B cell (primary cell): ENCODE measurements at regions of chr11 and their contacts with region 1.

Region 1: GRCh38 chr11:62694455-62695167 is 5.3 kb upstream of the LRRN4CL start:
- DNase-seq: peak; percentile 85
- ATAC-seq: peak; percentile 71
- H3K4me3 ChIP-seq: no peak overlapping the region
- H3K4me3 Mint-ChIP-seq: no peak overlapping the region
- H3K27ac ChIP-seq: no peak overlapping the region
- H3K27ac Mint-ChIP-seq: no peak overlapping the region
- H3K4me1 ChIP-seq: peaks cover 0 to 6% of the 10 kb centered on the region in 2 donors
- H3K4me1 Mint-ChIP-seq: peaks cover 5% of the 10 kb centered on the region
- H3K27me3 ChIP-seq: no peaks in the 10 kb centered on the region
- H3K27me3 Mint-ChIP-seq: no peaks in the 10 kb centered on the region
- CTCF ChIP-seq: peak; percentile 87

Region 2: GRCh38 chr11:62383822-62384221 is 310.8 kb before region 1 on chr11:
- CTCF ChIA-PET with region 1: interaction called, 3 read pairs
- POLR2A ChIA-PET with region 1: no interaction called
- intact Hi-C with region 1: loop called (anchors 1 kb)
- DNase-seq: no peak
- ATAC-seq: no peak
- H3K4me3 ChIP-seq: no peak overlapping the region
- H3K4me3 Mint-ChIP-seq: no peak overlapping the region
- H3K27ac ChIP-seq: no peak overlapping the region
- H3K27ac Mint-ChIP-seq: no peak overlapping the region
- H3K4me1 ChIP-seq: peaks cover 0 to 6% of the 10 kb centered on the region in 2 donors
- H3K4me1 Mint-ChIP-seq: peaks cover 5% of the 10 kb centered on the region
- H3K27me3 ChIP-seq: no peaks in the 10 kb centered on the region
- H3K27me3 Mint-ChIP-seq: no peaks in the 10 kb centered on the region
- CTCF ChIP-seq: no peak

Region 3: GRCh38 chr11:62394825-62395538 is 299.6 kb before region 1 on chr11:
- CTCF ChIA-PET with region 1: interaction called, 20 read pairs
- POLR2A ChIA-PET with region 1: no interaction called
- intact Hi-C with region 1: loop called (anchors 1 kb)
- DNase-seq: peak; percentile 81
- ATAC-seq: peak; percentile 68
- H3K4me3 ChIP-seq: no peak overlapping the region
- H3K4me3 Mint-ChIP-seq: no peak overlapping the region
- H3K27ac ChIP-seq: no peak overlapping the region
- H3K27ac Mint-ChIP-seq: no peak overlapping the region
- H3K4me1 ChIP-seq: no peaks in the 10 kb centered on the region
- H3K4me1 Mint-ChIP-seq: peaks cover 2% of the 10 kb centered on the region
- H3K27me3 ChIP-seq: peaks cover 0 to 5% (median 0%) of the 10 kb centered on the region in 4 experiments
- H3K27me3 Mint-ChIP-seq: peaks cover 11% of the 10 kb centered on the region
- CTCF ChIP-seq: peak; percentile 79

Region 4: GRCh38 chr11:62671575-62672389 is 22.8 kb before region 1 on chr11 and contains the starts of genes LBHD1 and UQCC3:
- CTCF ChIA-PET with region 1: interaction called, 10 read pairs
- POLR2A ChIA-PET with region 1: no interaction called
- intact Hi-C with region 1: no loop called
- DNase-seq: peak; percentile 86
- ATAC-seq: peak; percentile 77
- H3K4me3 ChIP-seq: peak within 1 kb of the TSS; percentile 85 to 97 (median 87)
- H3K4me3 Mint-ChIP-seq: peak within 1 kb of the TSS; percentile 100
- H3K27ac ChIP-seq: peak within 1 kb of the TSS; percentile 56 to 71
- H3K27ac Mint-ChIP-seq: peak within 1 kb of the TSS; percentile 97
- H3K4me1 ChIP-seq: peaks cover 21 to 36% of the 10 kb centered on the region in 2 donors
- H3K4me1 Mint-ChIP-seq: peaks cover 48% of the 10 kb centered on the region
- H3K27me3 ChIP-seq: no peaks in the 10 kb centered on the region
- H3K27me3 Mint-ChIP-seq: no peaks in the 10 kb centered on the region
- CTCF ChIP-seq: no peak
- total RNA-seq, gene LBHD1: 32.5 and 33.3 TPM in 2 replicates
- total RNA-seq, gene UQCC3: 6.5 and 8.9 TPM in 2 replicates

Region 5: DNA sequence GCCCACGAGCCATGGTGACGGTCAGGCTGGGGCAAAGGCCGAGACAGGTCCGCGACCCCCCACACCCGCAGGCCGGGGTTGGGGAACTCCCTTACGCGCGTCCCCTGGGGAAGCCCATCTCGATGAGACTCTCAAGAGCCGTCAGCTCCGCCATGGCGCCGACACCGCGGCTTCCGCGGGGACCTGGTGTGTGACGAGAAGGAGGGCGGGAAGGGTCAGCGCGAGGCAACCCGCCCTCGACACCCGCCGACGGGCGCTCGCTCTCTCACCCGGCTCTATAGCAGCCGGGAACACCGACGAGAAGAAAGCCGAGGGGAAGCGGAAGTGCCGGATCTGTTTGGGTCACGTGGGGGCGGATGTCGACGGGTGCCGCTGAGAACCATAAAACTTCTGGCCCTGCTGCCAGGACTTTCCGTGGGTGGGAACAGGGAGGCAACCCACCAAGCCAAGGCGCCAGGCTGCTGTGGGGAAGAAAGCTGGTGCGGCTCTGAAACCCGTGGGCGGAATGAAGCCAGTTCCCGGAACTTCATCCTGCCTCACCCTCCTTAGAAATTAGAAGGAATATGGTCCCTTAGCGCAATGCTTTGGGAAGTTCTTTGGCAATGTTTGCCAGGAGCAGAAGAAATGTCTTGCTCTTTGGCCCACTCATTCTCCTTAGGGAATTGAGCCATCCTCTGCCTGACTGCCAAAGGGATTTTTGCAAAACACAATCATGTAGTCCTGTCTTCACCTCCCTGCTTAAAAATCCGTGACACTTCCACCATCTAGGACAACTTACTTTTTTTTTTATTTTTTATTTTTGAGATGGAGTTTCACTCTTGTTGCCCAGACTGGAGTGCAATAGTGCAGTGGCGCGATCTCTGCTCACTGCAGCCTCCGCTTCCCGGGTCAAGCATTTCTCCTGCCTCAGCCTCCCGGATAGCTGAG is 15.6 kb before region 1 on chr11 and contains the start of gene UBXN1:
- CTCF ChIA-PET with region 1: interaction called, 32 read pairs
- POLR2A ChIA-PET with region 1: interaction called, 5 read pairs
- intact Hi-C with region 1: loop called (anchors 1 kb)
- DNase-seq: peak; percentile 92
- ATAC-seq: peak; percentile 77
- H3K4me3 ChIP-seq: peak within 1 kb of the TSS; percentile 71 to 99 (median 98)
- H3K4me3 Mint-ChIP-seq: peak within 1 kb of the TSS; percentile 88
- H3K27ac ChIP-seq: peak within 1 kb of the TSS; percentile 83 to 99
- H3K27ac Mint-ChIP-seq: peak within 1 kb of the TSS; percentile 93
- H3K4me1 ChIP-seq: peaks cover 9 to 20% of the 10 kb centered on the region in 2 donors
- H3K4me1 Mint-ChIP-seq: peaks cover 34% of the 10 kb centered on the region
- H3K27me3 ChIP-seq: no peaks in the 10 kb centered on the region
- H3K27me3 Mint-ChIP-seq: no peaks in the 10 kb centered on the region
- CTCF ChIP-seq: no peak
- total RNA-seq, gene UBXN1: 186 and 193 TPM in 2 replicates

Region 6: GRCh38 chr11:63042596-63042995 is 348.0 kb after region 1 on chr11:
- CTCF ChIA-PET with region 1: no interaction called
- POLR2A ChIA-PET with region 1: no interaction called
- intact Hi-C with region 1: no loop called
- DNase-seq: no peak
- ATAC-seq: no peak
- H3K4me3 ChIP-seq: no peak overlapping the region
- H3K4me3 Mint-ChIP-seq: no peak overlapping the region
- H3K27ac ChIP-seq: no peak overlapping the region
- H3K27ac Mint-ChIP-seq: no peak overlapping the region
- H3K4me1 ChIP-seq: no peaks in the 10 kb centered on the region
- H3K4me1 Mint-ChIP-seq: no peaks in the 10 kb centered on the region
- H3K27me3 ChIP-seq: no peaks in the 10 kb centered on the region
- H3K27me3 Mint-ChIP-seq: peaks cover 45% of the 10 kb centered on the region
- CTCF ChIP-seq: no peak